ENCODE measurements at regions of chr6 and their contacts with region 1.

Region 1: GRCh38 chr6:23036406-23036983 is 467.1 kb downstream of the HDGFL1 start:
- DNase-seq: no peak
- ATAC-seq: no peak
- H3K4me3 ChIP-seq: no peak overlapping the region
- H3K27ac ChIP-seq: no peak overlapping the region
- H3K4me1 ChIP-seq: no peaks in the 10 kb centered on the region
- H3K27me3 ChIP-seq: no peaks in the 10 kb centered on the region
- CTCF ChIP-seq: no peak

Region 2: GRCh38 chr6:23244300-23244699 is 207.8 kb after region 1 on chr6:
- intact Hi-C with region 1: loop called in 1 of 10 experiments (anchors 5 kb)
- DNase-seq: no peak
- ATAC-seq: no peak
- H3K4me3 ChIP-seq: no peak overlapping the region
- H3K27ac ChIP-seq: no peak overlapping the region
- H3K4me1 ChIP-seq: no peaks in the 10 kb centered on the region
- H3K27me3 ChIP-seq: no peaks in the 10 kb centered on the region
- CTCF ChIP-seq: no peak